ENCODE measurements at regions of chr6 and their contacts with region 1.

Region 1: GRCh38 chr6:134640975-134641429 is 308.9 kb downstream of the ALDH8A1 start:
- DNase-seq: peak; percentile 94
- H3K4me3 ChIP-seq: no peak overlapping the region
- H3K27ac ChIP-seq: peak overlapping the region; percentile 65
- H3K4me1 ChIP-seq: peaks cover 19% of the 10 kb centered on the region
- H3K27me3 ChIP-seq: no peaks in the 10 kb centered on the region
- CTCF ChIP-seq: peak; percentile 94 to 99

Region 2: DNA sequence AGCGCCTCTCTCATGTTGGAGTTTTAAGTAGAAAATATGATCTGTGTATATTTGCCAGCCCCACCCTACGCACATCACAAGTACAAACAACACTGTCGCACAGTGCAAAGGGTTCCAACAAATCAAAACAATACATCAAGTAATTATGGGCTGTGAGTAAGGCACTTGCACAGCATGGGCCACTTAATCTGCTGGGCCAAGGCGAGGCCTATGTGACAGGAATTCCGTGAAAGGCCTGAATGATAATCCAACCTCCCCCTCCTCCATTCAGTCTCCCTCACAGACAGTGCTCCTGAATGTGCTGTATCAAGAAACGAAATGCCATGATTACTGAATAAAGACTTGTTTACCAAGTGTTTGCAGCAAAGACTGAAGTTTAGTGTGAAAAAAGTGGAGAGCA is 458.5 kb before region 1 on chr6:
- CTCF ChIA-PET with region 1: no interaction called
- dilution Hi-C with region 1: no loop called
- in situ Hi-C with region 1: loop called (anchors 5 to 10 kb)
- intact Hi-C with region 1: loop called (anchors 1 kb)
- DNase-seq: no peak
- H3K4me3 ChIP-seq: no peak overlapping the region
- H3K27ac ChIP-seq: no peak overlapping the region
- H3K4me1 ChIP-seq: peaks cover 10% of the 10 kb centered on the region
- H3K27me3 ChIP-seq: no peaks in the 10 kb centered on the region
- CTCF ChIP-seq: no peak

Region 3: DNA sequence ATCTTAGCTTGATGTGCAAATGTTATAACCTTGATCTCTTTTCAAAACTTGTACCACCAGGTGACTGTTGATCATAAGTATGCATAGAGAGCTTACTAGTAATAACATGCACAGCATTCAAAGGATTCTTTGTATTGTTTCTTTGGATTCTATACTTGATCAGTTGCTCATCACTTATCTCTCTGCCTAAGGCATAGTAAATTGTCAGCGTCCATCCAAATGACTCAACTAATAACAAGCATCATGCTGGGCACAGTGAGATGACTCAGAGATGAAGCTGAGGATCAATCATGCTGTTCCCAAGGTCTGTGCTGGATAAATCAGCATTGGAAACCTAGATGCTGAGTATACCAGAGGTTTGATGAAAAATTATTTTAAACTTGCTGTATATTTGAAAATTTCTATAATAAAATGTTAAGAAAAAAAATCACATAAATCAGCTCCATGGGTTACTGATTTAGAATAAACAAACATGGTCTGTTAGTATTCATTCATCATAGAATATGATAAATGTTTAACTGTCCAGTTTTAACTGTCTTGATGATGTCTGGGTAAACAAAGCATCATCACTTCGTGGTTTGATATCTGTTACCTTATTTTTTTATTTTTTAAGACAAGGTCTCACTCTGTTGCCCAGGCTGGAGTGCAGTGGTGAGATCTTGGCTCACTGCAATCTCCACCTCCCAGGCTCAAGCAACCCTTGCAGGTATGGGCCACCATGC is 277.5 kb before region 1 on chr6:
- CTCF ChIA-PET with region 1: no interaction called
- dilution Hi-C with region 1: no loop called
- in situ Hi-C with region 1: no loop called
- intact Hi-C with region 1: loop called (anchors 5 kb)
- DNase-seq: peak; percentile 98
- H3K4me3 ChIP-seq: no peak overlapping the region
- H3K27ac ChIP-seq: peak overlapping the region; percentile 88
- H3K4me1 ChIP-seq: peaks cover 24% of the 10 kb centered on the region
- H3K27me3 ChIP-seq: no peaks in the 10 kb centered on the region
- CTCF ChIP-seq: no peak

Region 4: GRCh38 chr6:134436281-134436815 is 204.7 kb before region 1 on chr6:
- CTCF ChIA-PET with region 1: no interaction called
- dilution Hi-C with region 1: no loop called
- in situ Hi-C with region 1: no loop called
- intact Hi-C with region 1: loop called (anchors 1 kb)
- DNase-seq: peak; percentile 97
- H3K4me3 ChIP-seq: peak overlapping the region in 1 of 3 experiments; percentile 8
- H3K27ac ChIP-seq: peak overlapping the region; percentile 98
- H3K4me1 ChIP-seq: peaks cover 33% of the 10 kb centered on the region
- H3K27me3 ChIP-seq: no peaks in the 10 kb centered on the region
- CTCF ChIP-seq: no peak

Region 5: GRCh38 chr6:134537146-134537555 is 103.9 kb before region 1 on chr6:
- CTCF ChIA-PET with region 1: no interaction called
- dilution Hi-C with region 1: loop called (anchors 5 kb)
- in situ Hi-C with region 1: no loop called
- intact Hi-C with region 1: loop called (anchors 1 kb)
- DNase-seq: peak; percentile 100
- H3K4me3 ChIP-seq: no peak overlapping the region
- H3K27ac ChIP-seq: peak overlapping the region; percentile 83
- H3K4me1 ChIP-seq: peaks cover 57% of the 10 kb centered on the region
- H3K27me3 ChIP-seq: no peaks in the 10 kb centered on the region
- CTCF ChIP-seq: no peak

Region 6: DNA sequence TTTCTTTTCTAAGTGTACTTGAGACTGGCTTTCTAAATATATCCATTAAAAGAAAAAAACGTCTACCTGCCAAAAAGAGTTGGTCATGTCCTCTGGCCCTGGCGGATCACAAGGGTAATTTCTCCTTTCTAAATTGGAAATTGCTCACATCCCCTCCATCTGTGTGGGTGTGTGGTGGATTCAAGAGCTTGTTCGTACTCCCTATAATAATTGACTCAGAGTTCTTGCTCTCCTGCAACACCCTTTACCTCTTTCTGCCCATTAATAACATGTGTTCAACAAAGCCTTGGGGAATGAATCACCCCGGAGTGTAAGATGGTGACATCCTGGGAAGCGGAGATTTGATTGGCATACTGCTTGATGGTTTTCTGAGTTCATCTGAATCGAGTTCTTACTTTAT is 45.1 kb after region 1 on chr6:
- CTCF ChIA-PET with region 1: no interaction called
- dilution Hi-C with region 1: no loop called
- in situ Hi-C with region 1: no loop called
- intact Hi-C with region 1: loop called (anchors 5 kb)
- DNase-seq: peak; percentile 95
- H3K4me3 ChIP-seq: no peak overlapping the region
- H3K27ac ChIP-seq: peak overlapping the region; percentile 40
- H3K4me1 ChIP-seq: peaks cover 28% of the 10 kb centered on the region
- H3K27me3 ChIP-seq: no peaks in the 10 kb centered on the region
- CTCF ChIP-seq: peak in 1 of 2 donors; percentile 25

Region 7: GRCh38 chr6:134729561-134729960 is 88.6 kb after region 1 on chr6:
- CTCF ChIA-PET with region 1: no interaction called
- dilution Hi-C with region 1: no loop called
- in situ Hi-C with region 1: no loop called
- intact Hi-C with region 1: no loop called
- DNase-seq: no peak
- H3K4me3 ChIP-seq: no peak overlapping the region
- H3K27ac ChIP-seq: no peak overlapping the region
- H3K4me1 ChIP-seq: no peaks in the 10 kb centered on the region
- H3K27me3 ChIP-seq: no peaks in the 10 kb centered on the region
- CTCF ChIP-seq: no peak

Region 8: DNA sequence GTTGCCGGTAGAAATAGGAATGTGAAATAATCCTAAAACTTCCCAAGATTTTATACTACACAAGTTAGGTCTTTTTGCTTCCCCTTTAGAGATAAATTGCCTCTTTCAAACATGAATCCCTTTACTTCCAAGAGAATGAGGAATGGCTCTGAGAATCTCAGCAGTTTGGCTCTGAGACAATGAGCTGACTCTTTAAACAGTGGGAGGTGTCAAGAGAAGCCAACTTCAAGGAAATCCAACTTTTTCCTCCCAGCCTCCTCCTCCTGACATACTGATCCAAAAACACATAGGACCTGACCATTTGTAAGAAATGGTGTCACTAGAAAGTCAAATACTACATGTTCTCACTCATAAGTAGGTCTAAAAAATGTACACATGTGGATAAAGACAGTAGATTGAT is 154.7 kb after region 1 on chr6:
- CTCF ChIA-PET with region 1: no interaction called
- dilution Hi-C with region 1: no loop called
- in situ Hi-C with region 1: no loop called
- intact Hi-C with region 1: no loop called
- DNase-seq: no peak
- H3K4me3 ChIP-seq: no peak overlapping the region
- H3K27ac ChIP-seq: no peak overlapping the region
- H3K4me1 ChIP-seq: no peaks in the 10 kb centered on the region
- H3K27me3 ChIP-seq: no peaks in the 10 kb centered on the region
- CTCF ChIP-seq: no peak

Region 9: GRCh38 chr6:135052939-135053338 is 411.9 kb after region 1 on chr6:
- CTCF ChIA-PET with region 1: no interaction called
- dilution Hi-C with region 1: no loop called
- in situ Hi-C with region 1: no loop called
- intact Hi-C with region 1: no loop called
- DNase-seq: no peak
- H3K4me3 ChIP-seq: peak overlapping the region in 2 of 3 experiments; percentile 74 to 88
- H3K27ac ChIP-seq: no peak overlapping the region
- H3K4me1 ChIP-seq: peaks cover 5% of the 10 kb centered on the region
- H3K27me3 ChIP-seq: no peaks in the 10 kb centered on the region
- CTCF ChIP-seq: no peak

Region 10: DNA sequence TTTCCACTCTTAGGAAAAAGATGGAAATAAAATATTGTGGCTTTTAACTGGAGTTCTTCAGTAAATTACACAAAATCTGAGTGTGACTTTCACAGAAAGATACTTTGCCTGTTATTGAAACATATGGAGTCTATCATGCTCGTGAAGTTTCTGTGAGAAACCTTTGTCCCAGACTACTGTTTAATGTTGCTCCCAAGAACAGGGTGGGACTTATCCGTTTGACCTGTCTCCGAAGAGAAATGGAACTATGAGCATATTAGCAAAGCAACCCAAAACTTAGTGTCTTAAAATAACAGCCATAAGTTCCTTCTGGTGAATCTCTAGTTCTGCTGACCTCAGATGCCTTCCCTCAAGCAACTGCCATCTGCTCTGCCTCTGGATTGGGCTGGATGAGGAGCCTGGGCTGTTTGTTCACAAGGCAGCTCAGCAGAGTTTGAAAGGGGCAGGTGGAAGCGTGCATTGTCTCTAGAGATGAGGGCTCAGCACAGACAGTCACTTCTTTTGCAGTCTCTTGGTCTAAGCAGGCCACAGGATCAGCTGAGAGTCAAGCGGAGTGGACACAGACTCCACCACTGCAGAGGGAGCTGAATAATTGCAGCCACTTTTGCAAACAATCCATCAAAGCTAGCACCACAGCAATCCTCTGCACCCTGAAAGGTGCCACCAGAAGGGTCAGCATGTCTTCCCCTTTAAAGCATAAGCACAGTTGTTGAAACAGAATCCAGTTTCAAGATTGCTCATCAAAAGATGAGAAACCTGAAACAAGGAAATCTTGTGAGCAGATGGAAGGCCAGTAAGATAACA is 592.9 kb after region 1 on chr6:
- CTCF ChIA-PET with region 1: no interaction called
- dilution Hi-C with region 1: no loop called
- in situ Hi-C with region 1: no loop called
- intact Hi-C with region 1: no loop called
- DNase-seq: no peak
- H3K4me3 ChIP-seq: no peak overlapping the region
- H3K27ac ChIP-seq: no peak overlapping the region
- H3K4me1 ChIP-seq: no peaks in the 10 kb centered on the region
- H3K27me3 ChIP-seq: peaks cover 2% of the 10 kb centered on the region
- CTCF ChIP-seq: no peak

Measured in mammary epithelial cell (primary cell).